Breast epithelium (tissue), 4 donors: ENCODE measurements at regions of chr15 and their contacts with region 1.

Region 1: DNA sequence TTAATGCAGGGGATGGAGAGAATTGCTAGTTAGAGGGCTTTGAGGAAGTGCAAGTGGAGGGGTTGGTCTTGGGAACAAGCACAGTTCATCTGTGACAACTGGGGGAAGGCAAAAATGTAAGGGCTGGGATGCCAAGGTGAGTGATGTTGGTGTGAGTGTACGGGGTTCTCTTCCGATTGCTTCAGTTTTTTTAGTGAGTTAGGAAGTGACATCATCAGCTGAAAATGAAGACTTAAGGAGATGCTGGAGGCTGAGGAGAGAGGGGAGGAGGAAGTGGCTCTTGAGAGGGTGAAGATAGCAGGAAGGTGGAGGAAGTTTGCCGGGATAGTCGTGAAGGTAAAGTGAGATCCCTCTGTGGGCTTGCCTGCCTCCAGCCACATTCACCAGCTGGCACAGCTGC is 12.7 kb downstream of the TICRR start:
- DNase-seq: no peak
- H3K4me3 ChIP-seq: no peak overlapping the region
- H3K27ac ChIP-seq: no peak overlapping the region
- H3K4me1 ChIP-seq: no peaks in the 10 kb centered on the region
- H3K27me3 ChIP-seq: no peaks in the 10 kb centered on the region
- CTCF ChIP-seq: no peak
- POLR2A ChIP-seq: no peak

Region 2: GRCh38 chr15:89378296-89379151 is 209.4 kb before region 1 on chr15:
- intact Hi-C with region 1: loop called (anchors 10 kb)
- DNase-seq: peak; percentile 71 to 82
- H3K4me3 ChIP-seq: peak overlapping the region; percentile 32 to 76 (median 48)
- H3K27ac ChIP-seq: peak overlapping the region; percentile 66 to 83
- H3K4me1 ChIP-seq: peaks cover 18 to 24% of the 10 kb centered on the region in 2 donors
- H3K27me3 ChIP-seq: peaks cover 0 to 6% of the 10 kb centered on the region in 2 donors
- CTCF ChIP-seq: no peak
- POLR2A ChIP-seq: no peak

Region 3: DNA sequence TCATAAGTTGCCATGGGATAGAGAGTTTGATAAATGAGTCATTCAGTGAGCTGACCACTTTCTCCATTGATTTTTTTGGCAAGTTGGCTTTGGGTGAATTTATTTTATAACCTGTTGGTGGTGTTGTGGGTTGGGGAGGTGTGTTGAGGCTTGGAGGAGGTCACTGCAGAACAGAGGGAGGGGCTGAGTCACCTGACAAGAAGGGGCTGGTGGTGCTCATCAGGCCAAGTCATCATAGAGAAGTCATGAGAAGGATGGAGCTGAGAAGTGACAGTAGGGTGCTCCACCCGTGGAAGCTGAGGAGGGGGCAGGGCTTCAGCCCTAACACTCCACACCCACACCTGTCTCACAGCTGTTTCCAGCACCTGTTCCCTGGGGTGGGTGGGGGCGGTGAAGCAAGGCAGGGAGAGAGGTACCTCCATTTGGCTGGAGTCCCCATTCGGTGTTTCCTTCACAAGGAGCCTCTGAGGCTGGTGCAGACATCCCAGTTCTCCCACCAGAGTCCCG is 102.0 kb before region 1 on chr15:
- intact Hi-C with region 1: no loop called
- DNase-seq: no peak
- H3K4me3 ChIP-seq: no peak overlapping the region
- H3K27ac ChIP-seq: no peak overlapping the region
- H3K4me1 ChIP-seq: no peaks in the 10 kb centered on the region
- H3K27me3 ChIP-seq: peaks cover 0 to 17% of the 10 kb centered on the region in 2 donors
- CTCF ChIP-seq: no peak
- POLR2A ChIP-seq: no peak

Region 4: GRCh38 chr15:90814191-90814821 is 1226.4 kb after region 1 on chr15:
- intact Hi-C with region 1: no loop called
- DNase-seq: no peak
- H3K4me3 ChIP-seq: no peak overlapping the region
- H3K27ac ChIP-seq: peak overlapping the region; percentile 54 to 58
- H3K4me1 ChIP-seq: no peaks in the 10 kb centered on the region
- H3K27me3 ChIP-seq: no peaks in the 10 kb centered on the region
- CTCF ChIP-seq: no peak
- POLR2A ChIP-seq: no peak